ENCODE measurements at regions of chr13 and their contacts with region 1.

Region 1: DNA sequence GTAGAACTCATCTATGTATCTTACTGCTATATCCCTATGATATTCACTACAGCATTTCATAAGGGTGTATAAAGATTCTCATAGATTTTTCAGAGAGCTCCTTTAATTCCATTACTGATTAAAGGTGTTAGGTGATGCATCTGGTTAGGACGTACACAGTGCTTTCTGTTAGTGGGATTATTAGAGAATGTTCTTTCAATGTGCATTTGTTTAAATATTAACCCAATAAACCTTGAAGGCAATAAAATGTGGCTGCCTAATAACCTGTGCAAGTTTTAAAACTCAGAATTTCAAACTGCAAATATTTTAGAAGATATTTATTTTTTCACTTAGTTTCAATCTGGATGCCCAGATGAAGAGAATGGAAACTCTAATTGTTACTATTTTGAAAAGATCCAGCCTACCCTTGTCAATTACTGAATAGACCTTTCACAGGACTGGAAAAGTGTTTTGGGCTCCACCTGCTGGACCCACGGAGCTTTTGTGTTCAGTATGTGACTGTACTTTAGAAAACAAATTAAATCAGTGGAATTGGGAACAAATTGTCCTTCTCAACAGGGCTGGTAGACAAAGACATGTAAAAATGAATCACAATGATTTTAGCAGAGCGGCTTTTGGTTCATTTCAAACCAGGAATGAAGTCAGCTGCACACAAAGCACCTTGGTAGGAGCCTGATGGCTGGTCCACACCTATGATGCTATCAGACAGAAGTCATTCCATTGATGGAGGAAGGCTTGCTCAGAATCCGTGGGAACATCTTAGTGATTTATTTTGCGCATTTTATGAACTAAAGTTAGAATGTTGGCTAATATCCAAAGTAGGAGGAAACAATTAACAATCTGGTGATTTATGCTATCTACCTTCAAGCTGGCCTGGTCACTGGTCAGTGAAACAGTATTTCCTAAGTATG is 89.4 kb upstream of the RAP2A start:
- DNase-seq: peak; percentile 67
- H3K4me3 ChIP-seq: no peak overlapping the region
- H3K27ac ChIP-seq: peak overlapping the region; percentile 61 to 65
- H3K4me1 ChIP-seq: peaks cover 10 to 11% of the 10 kb centered on the region in 2 experiments; a peak in 3 of 4 replicates
- H3K27me3 ChIP-seq: no peaks in the 10 kb centered on the region
- CTCF ChIP-seq: peak; percentile 83
- EP300 ChIP-seq: peak in 1 of 2 experiments; percentile 49; a peak in 1 of 4 replicates
- RAD21 ChIP-seq: peak; percentile 89

Region 2: DNA sequence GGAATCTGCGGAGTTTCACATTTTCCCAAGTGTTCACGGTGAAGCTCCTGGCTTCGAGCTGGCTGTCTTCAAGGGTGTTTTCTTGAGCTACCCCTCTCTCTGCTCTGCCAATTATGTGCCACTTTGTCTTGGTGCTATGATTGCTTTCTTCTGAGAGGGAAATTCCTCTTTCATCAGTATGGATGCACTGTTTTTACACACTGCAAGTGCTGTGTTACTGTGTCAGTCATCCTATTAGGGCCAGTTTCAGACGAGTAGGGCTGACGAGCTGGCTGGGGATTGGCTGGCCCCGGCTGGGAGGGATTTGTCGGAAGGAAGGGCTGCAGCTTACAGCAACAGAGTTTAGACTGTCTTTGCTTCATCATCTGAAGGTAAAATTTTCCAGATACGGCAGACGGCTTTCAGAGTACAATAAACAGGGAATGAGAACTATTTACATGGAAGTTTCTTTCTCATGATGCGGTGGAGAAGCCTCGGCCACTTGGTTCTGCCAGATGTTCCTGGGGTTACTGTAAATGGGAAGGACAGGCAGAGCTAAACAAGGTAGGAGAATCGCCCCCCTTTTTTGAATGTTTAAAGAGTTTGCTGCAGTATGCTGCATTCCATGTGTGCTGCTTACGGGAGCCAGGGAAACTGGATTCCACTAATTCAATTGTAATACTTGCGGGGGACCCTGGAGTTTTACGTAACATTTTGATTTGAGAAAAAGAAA is 122.4 kb before region 1 on chr13 and contains the start of gene MBNL2:
- CTCF ChIA-PET with region 1: interaction called, 11 read pairs
- POLR2A ChIA-PET with region 1: no interaction called
- DNase-seq: peak; percentile 80
- H3K4me3 ChIP-seq: peak within 1 kb of the TSS; percentile 75 to 77
- H3K27ac ChIP-seq: peak within 1 kb of the TSS; percentile 95 to 97
- H3K4me1 ChIP-seq: peaks cover 14 to 28% of the 10 kb centered on the region in 2 experiments
- H3K27me3 ChIP-seq: no peaks in the 10 kb centered on the region
- CTCF ChIP-seq: no peak
- EP300 ChIP-seq: no peak
- RAD21 ChIP-seq: no peak
- polyA plus RNA-seq, gene MBNL2: 24.5 and 27.9 TPM in 2 replicates

Region 3: GRCh38 chr13:97328222-97328790 is 16.2 kb before region 1 on chr13:
- CTCF ChIA-PET with region 1: interaction called, 14 read pairs
- POLR2A ChIA-PET with region 1: no interaction called
- DNase-seq: no peak
- H3K4me3 ChIP-seq: no peak overlapping the region
- H3K27ac ChIP-seq: peak overlapping the region; percentile 70 to 74
- H3K4me1 ChIP-seq: peaks cover 21 to 23% of the 10 kb centered on the region in 2 experiments
- H3K27me3 ChIP-seq: no peaks in the 10 kb centered on the region
- CTCF ChIP-seq: no peak
- EP300 ChIP-seq: peak in 1 of 2 experiments; percentile 23; a peak in 1 of 4 replicates
- RAD21 ChIP-seq: no peak

Region 4: GRCh38 chr13:97333983-97334382 is 10.5 kb before region 1 on chr13:
- CTCF ChIA-PET with region 1: interaction called, 14 read pairs
- POLR2A ChIA-PET with region 1: no interaction called
- DNase-seq: no peak
- H3K4me3 ChIP-seq: no peak overlapping the region
- H3K27ac ChIP-seq: peak overlapping the region; percentile 6 to 61; a peak in 1 of 4 replicates
- H3K4me1 ChIP-seq: peaks cover under 1 to 22% of the 10 kb centered on the region in 2 experiments; a peak in 2 of 4 replicates
- H3K27me3 ChIP-seq: no peaks in the 10 kb centered on the region
- CTCF ChIP-seq: 0 out of 2 replicates have a peak, but pooled peaks have one; percentile 10
- EP300 ChIP-seq: no peak
- RAD21 ChIP-seq: no peak

Region 5: GRCh38 chr13:97574926-97575325 is 230.4 kb after region 1 on chr13:
- CTCF ChIA-PET with region 1: no interaction called
- POLR2A ChIA-PET with region 1: no interaction called
- DNase-seq: no peak
- H3K4me3 ChIP-seq: no peak overlapping the region
- H3K27ac ChIP-seq: no peak overlapping the region
- H3K4me1 ChIP-seq: peaks cover 2 to 6% of the 10 kb centered on the region in 2 experiments; a peak in 2 of 4 replicates
- H3K27me3 ChIP-seq: no peaks in the 10 kb centered on the region; the same call in 1 of the 2 replicates
- CTCF ChIP-seq: peak; percentile 47
- EP300 ChIP-seq: no peak
- RAD21 ChIP-seq: peak; percentile 66

Measured in SK-N-SH (cell line).